Dendritic cell treated with granulocyte-macrophage colony-stimulating factor and Interleukin-4, amounts not matched to agents 40 ng/mL and 50 ng/mL, for 4 days (primary cell): ENCODE measurements at regions of chr10 and their contacts with region 1.

Region 1: GRCh38 chr10:114458955-114459354 is 54.7 kb upstream of the AFAP1L2 start:
- H3K4me3 Mint-ChIP-seq: no peak overlapping the region
- H3K27ac Mint-ChIP-seq: no peak overlapping the region
- H3K4me1 Mint-ChIP-seq: peaks cover 6% of the 10 kb centered on the region
- H3K27me3 Mint-ChIP-seq: peaks cover 2% of the 10 kb centered on the region

Region 2: GRCh38 chr10:114304017-114304570 is 154.9 kb before region 1 on chr10:
- intact Hi-C with region 1: loop called (anchors 1 kb)
- H3K4me3 Mint-ChIP-seq: peak overlapping the region; percentile 63
- H3K27ac Mint-ChIP-seq: no peak overlapping the region
- H3K4me1 Mint-ChIP-seq: peaks cover 11% of the 10 kb centered on the region
- H3K27me3 Mint-ChIP-seq: peaks cover 9% of the 10 kb centered on the region